ENCODE measurements at regions of chr12 and their contacts with region 1.

Region 1: DNA sequence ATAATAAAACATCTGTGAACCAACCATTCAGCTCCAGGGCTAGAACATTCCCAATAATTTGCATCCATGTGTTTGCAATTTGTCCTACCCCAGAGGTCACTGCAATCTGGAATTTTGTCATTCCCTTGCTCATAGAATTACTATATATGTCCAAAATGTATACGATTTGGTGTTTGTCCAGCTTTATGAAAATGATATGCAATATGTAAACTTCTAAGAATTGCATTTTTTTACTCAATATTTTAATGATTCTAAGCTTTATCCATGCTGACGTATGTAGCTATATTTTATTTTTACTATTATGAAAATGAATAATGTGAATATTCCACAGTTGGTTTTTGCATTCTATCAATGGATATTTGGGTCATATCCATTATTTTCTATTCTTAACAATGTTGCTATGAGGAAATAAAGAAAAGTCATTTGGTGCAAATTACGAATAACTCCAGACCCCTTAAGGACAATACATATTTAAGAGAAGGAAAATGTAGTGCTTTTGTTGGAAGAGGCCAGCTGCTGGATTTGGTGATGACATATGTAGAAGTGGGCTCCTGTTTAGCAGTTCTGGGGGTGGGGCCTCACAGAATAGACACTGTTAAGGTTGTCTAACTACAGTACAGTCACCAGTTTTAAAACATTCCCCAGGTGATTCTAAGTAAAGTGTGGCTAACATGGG is 139.4 kb downstream of the SLC38A4 start:
- DNase-seq: no peak
- ATAC-seq: no peak

Region 2: GRCh38 chr12:46332260-46332659 is 354.1 kb before region 1 on chr12:
- intact Hi-C with region 1: no loop called
- DNase-seq: no peak
- ATAC-seq: no peak

Region 3: GRCh38 chr12:46650607-46651088 is 35.8 kb before region 1 on chr12:
- intact Hi-C with region 1: no loop called
- DNase-seq: no peak
- ATAC-seq: no peak

Region 4: DNA sequence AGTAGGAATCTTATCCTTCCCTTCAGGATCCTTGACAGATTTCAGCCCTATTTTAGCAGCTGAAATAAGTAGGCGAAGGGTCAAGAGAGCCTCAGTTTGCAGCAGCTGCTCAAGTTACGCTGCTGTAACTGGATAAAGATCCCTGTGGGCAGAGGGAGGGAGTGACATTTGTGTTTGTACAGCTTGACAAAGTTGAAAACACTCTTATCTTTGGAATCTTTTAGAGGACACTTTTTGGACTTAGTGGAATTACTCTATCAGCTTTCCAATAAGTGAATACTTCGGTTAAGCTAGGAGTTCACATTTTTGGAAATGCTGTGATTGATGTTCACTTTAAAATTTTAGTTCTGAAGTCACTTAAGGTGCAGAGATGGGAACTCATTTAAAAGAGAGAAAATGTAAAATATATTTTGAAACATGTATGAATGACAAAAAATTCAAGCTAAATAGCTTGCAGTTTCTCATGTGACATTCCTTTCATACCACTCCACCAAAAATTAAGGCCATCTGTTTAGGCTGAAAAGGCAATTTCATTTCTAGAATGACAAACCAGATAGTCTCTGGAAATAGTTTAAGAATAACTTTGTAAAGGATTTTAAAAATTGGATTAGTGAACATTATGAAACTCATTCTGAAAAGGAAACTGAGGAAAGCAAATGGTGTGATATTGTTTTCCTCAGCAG is 84.2 kb after region 1 on chr12:
- intact Hi-C with region 1: no loop called
- DNase-seq: no peak
- ATAC-seq: peak; percentile 90

Region 5: GRCh38 chr12:46933947-46934346 is 247.5 kb after region 1 on chr12:
- intact Hi-C with region 1: loop called (anchors 5 kb)
- DNase-seq: no peak
- ATAC-seq: peak; percentile 87